ENCODE measurements at regions of chr16 and their contacts with region 1.

Region 1: DNA sequence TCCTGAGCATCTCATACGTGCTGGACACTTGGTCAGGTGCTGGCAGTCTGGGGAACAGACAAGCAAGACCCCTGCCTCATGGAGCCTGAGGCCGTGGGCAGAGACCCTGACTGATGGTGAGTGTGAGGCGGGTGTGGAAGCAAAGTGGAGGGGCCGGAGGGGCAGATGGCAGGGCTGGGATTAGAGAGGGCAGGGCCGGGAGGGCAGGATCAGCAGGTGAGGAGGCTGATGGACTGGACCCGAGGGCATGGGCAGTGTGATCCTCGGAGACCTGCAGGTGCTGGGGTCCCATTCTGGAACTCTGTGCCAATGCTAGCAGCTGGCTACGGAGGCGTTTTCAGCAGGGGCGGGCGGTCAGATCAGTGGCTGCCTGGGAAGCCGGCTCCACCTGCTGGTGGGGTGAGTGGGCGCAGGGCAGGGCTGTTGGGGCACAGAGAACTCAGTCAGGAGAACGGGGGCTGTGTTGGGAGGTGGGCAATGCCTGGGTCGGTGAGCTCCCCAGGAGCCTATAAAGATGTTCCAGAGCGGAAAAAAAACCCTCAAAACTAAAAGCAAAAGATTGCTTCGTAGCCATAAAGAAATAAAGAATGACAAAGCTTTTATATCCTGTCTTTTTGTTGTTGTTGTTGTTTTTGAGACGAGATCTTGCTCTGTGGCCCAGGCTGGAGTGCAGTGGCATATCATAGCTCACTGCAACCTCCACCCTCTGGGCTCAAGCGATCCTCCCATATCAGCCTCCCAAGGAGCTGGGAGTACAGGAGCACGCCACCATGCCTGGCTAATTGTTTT is 8.9 kb upstream of the C16orf74 start:
- DNase-seq: peak; percentile 53
- ATAC-seq: no peak
- H3K4me3 Mint-ChIP-seq: peak overlapping the region; percentile 44
- H3K27ac Mint-ChIP-seq: peak overlapping the region; percentile 100
- H3K4me1 Mint-ChIP-seq: peaks cover 77% of the 10 kb centered on the region
- H3K27me3 Mint-ChIP-seq: no peaks in the 10 kb centered on the region
- CTCF ChIP-seq: no peak

Region 2: GRCh38 chr16:85610508-85611332 is 149.1 kb before region 1 on chr16:
- CTCF ChIA-PET with region 1: no interaction called
- POLR2A ChIA-PET with region 1: interaction called, 3 read pairs
- intact Hi-C with region 1: loop called (anchors 2 kb)
- DNase-seq: peak; percentile 89
- ATAC-seq: peak; percentile 62
- H3K4me3 Mint-ChIP-seq: peak overlapping the region; percentile 81
- H3K27ac Mint-ChIP-seq: peak overlapping the region; percentile 70
- H3K4me1 Mint-ChIP-seq: peaks cover 63% of the 10 kb centered on the region
- H3K27me3 Mint-ChIP-seq: no peaks in the 10 kb centered on the region
- CTCF ChIP-seq: peak; percentile 77

Region 3: DNA sequence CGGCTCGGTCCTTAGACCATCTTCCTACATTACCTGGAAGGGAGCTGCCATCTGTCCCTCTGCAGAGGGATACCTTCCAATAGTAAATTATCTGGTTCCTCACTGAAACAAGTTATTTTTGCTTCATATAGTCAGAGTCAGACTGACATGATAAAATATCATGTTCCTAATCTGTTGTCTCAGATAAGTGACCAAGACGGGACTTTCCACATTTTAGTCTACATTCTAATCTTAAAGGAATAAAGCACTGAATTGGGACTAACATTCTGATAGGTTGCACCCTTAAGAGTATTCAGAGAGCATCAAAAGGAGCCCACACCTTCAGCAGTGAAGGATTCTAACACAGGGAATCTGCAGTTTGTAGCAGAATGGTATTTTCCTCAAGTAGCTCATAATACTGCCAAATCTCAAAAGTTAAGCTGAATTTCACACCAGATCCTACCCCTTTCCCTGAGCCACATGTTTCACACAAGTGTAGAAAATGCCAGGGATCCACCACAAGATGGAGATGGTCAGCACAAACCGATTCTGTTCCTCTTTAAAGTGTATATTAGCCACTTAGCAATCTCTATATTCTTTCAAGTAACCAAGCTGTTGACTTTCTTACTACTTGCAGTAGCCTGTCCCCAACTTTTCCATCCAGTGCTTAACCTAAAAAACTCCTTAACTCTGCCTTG is 84.4 kb before region 1 on chr16:
- CTCF ChIA-PET with region 1: interaction called, 42 read pairs
- POLR2A ChIA-PET with region 1: no interaction called
- intact Hi-C with region 1: loop called (anchors 1 kb)
- DNase-seq: no peak
- ATAC-seq: no peak
- H3K4me3 Mint-ChIP-seq: no peak overlapping the region
- H3K27ac Mint-ChIP-seq: peak overlapping the region; percentile 26
- H3K4me1 Mint-ChIP-seq: peaks cover 9% of the 10 kb centered on the region
- H3K27me3 Mint-ChIP-seq: no peaks in the 10 kb centered on the region
- CTCF ChIP-seq: no peak

Region 4: DNA sequence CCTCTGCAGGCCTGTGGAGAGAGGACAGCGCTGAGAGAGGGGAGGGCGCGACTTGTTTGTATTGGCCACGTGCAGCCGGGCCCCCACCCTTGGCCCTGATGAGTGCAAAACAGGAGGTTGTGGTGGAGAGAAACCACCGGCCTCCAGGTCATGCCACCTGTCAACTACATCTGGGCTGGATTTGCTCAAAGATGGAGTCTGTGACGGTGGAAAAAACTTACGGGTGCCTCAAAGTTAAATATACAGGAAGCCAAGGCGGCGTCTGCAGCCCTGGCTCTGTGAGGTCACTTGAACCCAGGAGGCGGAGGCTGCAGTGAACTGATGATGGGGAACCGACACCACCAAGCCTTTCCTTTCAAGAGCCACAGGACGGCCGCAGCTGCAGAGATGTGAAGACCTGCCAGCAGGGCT is 24.6 kb before region 1 on chr16:
- CTCF ChIA-PET with region 1: interaction called, 3 read pairs
- POLR2A ChIA-PET with region 1: interaction called, 16 read pairs
- intact Hi-C with region 1: loop called (anchors 1 kb)
- DNase-seq: peak; percentile 28
- ATAC-seq: peak; percentile 85
- H3K4me3 Mint-ChIP-seq: peak overlapping the region; percentile 59
- H3K27ac Mint-ChIP-seq: peak overlapping the region; percentile 50
- H3K4me1 Mint-ChIP-seq: peaks cover 34% of the 10 kb centered on the region
- H3K27me3 Mint-ChIP-seq: no peaks in the 10 kb centered on the region
- CTCF ChIP-seq: no peak

Region 5: GRCh38 chr16:85898521-85899442 is 139.0 kb after region 1 on chr16 and contains the start of gene IRF8:
- CTCF ChIA-PET with region 1: no interaction called
- POLR2A ChIA-PET with region 1: interaction called, 6 read pairs
- intact Hi-C with region 1: loop called (anchors 5 kb)
- DNase-seq: peak; percentile 89
- ATAC-seq: peak; percentile 64
- H3K4me3 Mint-ChIP-seq: peak within 1 kb of the TSS; percentile 84
- H3K27ac Mint-ChIP-seq: peak within 1 kb of the TSS; percentile 95
- H3K4me1 Mint-ChIP-seq: peaks cover 63% of the 10 kb centered on the region
- H3K27me3 Mint-ChIP-seq: no peaks in the 10 kb centered on the region
- CTCF ChIP-seq: no peak
- total RNA-seq, gene IRF8: 234 and 248 TPM in 2 replicates

Region 6: GRCh38 chr16:86016201-86016871 is 256.5 kb after region 1 on chr16:
- CTCF ChIA-PET with region 1: no interaction called
- POLR2A ChIA-PET with region 1: no interaction called
- intact Hi-C with region 1: loop called (anchors 5 kb)
- DNase-seq: peak; percentile 32
- ATAC-seq: peak; percentile 60
- H3K4me3 Mint-ChIP-seq: no peak overlapping the region
- H3K27ac Mint-ChIP-seq: no peak overlapping the region
- H3K4me1 Mint-ChIP-seq: peaks cover 36% of the 10 kb centered on the region
- H3K27me3 Mint-ChIP-seq: peaks cover 6% of the 10 kb centered on the region
- CTCF ChIP-seq: no peak